ENCODE measurements at regions of chr12 and their contacts with region 1.

Region 1: DNA sequence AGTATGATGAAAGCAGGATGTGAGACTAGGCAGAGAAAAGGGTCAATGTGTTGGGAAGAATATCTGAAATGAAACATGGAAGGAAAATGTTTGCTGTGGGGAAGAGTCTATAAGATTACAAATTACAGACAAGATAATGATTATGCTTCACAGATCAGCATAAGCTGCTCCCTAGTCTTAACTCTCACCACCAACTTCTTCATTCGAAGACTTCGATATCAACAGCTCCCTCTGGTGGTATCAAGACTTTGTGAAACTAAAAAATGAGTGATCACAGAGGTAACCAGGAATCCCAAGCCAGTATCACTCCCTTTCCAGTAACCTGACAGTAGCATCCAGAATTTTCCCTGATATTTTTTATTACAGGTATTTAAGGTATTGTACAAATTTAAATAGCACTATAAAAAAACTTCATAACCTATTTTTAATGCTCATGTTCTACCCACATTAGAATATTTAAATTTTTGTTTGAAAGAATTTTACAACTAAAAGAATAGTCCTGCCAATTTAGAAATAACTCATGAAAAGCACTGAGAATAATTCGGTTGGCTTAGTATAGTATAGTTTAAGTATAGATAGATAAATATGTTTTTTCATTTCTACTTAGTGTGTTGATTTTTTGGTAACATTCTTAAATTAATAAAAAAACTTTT is 84.4 kb downstream of the C2CD5 start:
- DNase-seq: no peak
- H3K4me3 ChIP-seq: no peak overlapping the region
- H3K27ac ChIP-seq: no peak overlapping the region
- H3K27me3 ChIP-seq: no peaks in the 10 kb centered on the region
- CTCF ChIP-seq: peak; percentile 75

Region 2: DNA sequence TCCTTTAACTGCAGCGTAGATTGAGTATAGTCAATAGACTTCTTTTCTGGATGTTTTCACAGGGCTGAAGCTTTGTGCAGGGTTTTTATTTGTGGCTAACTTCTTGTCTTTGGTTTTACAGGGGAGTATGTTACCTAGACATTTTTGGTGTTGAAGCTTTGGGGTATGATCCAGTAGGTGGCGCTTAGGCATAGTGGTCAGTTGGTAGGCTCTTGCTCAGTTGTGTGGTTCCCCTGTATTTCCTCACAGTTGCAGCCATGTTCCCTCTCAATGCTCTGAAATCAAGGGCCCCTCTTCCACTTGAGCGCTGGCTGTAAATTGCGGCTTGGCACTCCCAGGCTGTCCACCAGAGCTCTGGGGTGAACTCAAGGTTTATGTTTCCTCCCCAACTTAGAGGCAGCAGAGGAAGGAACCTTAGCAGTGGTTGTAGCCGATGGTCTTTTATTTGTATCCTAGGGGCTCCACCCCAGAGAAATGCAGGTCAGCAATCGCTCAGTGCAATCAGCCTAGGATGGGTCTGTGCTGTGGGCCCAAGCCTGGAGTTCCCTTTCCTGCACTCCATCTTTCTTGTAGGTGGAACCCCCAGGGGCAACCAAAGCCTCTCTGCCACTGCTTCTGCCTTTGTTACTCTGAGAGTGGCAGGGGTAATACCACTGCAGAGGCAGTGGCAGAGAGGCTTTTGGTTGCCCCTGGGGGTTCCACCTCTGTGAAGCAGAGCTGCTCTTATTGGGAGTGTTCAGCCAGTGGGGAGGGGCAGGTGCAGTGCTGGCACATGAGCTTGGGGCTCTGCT is 358.8 kb before region 1 on chr12:
- CTCF ChIA-PET with region 1: interaction called, 11 read pairs
- POLR2A ChIA-PET with region 1: no interaction called
- DNase-seq: peak; percentile 15
- H3K4me3 ChIP-seq: no peak overlapping the region
- H3K27ac ChIP-seq: no peak overlapping the region
- H3K27me3 ChIP-seq: peaks cover 7% of the 10 kb centered on the region
- CTCF ChIP-seq: peak; percentile 63

Region 3: DNA sequence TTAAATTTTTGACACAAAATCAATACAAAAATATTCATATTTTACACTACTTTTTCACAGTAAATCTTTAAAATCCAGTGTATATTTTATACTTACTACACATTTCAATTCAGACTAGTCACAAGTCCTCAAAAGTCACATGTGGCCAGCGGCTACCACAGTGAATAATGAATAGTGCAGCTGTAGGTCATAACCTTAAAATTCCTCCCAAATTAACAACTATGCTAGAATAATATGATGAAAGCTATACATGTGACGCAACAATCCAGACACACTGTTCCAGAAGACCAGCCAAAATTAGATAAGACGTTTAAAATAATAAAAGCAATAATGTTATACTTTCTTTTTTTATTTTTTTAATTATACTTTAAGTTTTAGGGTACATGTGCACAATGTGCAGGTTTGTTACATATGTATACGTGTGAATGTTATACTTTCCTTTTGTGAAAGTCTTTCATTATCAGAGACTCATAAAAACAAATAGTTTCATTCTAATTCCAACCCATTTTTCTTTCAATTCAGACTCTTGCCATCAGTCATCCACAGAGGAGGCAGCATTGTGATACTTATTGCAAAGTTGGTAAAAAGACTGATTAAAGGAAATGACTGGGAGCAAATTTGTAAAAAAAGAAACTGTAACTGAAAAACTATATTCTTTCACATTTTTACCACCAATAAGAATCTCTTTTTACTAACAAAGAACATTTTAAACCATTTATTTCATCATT is 17.4 kb after region 1 on chr12:
- CTCF ChIA-PET with region 1: interaction called, 61 read pairs
- POLR2A ChIA-PET with region 1: no interaction called
- DNase-seq: peak; percentile 32
- H3K4me3 ChIP-seq: no peak overlapping the region
- H3K27ac ChIP-seq: no peak overlapping the region
- H3K27me3 ChIP-seq: no peaks in the 10 kb centered on the region
- CTCF ChIP-seq: no peak

Region 4: GRCh38 chr12:22640851-22641250 is 180.9 kb after region 1 on chr12:
- CTCF ChIA-PET with region 1: interaction called, 10 read pairs
- POLR2A ChIA-PET with region 1: no interaction called
- DNase-seq: no peak
- H3K4me3 ChIP-seq: no peak overlapping the region
- H3K27ac ChIP-seq: no peak overlapping the region
- H3K27me3 ChIP-seq: no peaks in the 10 kb centered on the region
- CTCF ChIP-seq: no peak